Transverse colon (tissue), 4 donors: ENCODE measurements at regions of chrX and their contacts with region 1.

Region 1: GRCh38 chrX:27838176-27838575 is 30.4 kb downstream of the MAGEB10 start:
- DNase-seq: no peak
- H3K4me3 ChIP-seq: no peak overlapping the region
- H3K27ac ChIP-seq: no peak overlapping the region
- H3K4me1 ChIP-seq: no peaks in the 10 kb centered on the region
- H3K27me3 ChIP-seq: no peaks in the 10 kb centered on the region
- CTCF ChIP-seq: no peak
- EP300 ChIP-seq: no peak
- POLR2A ChIP-seq: no peak

Region 2: GRCh38 chrX:27878862-27879261 is 40.7 kb after region 1 on chrX:
- in situ Hi-C with region 1: no loop called
- intact Hi-C with region 1: no loop called
- DNase-seq: no peak
- H3K4me3 ChIP-seq: no peak overlapping the region
- H3K27ac ChIP-seq: no peak overlapping the region
- H3K4me1 ChIP-seq: no peaks in the 10 kb centered on the region
- H3K27me3 ChIP-seq: no peaks in the 10 kb centered on the region
- CTCF ChIP-seq: no peak
- EP300 ChIP-seq: no peak
- POLR2A ChIP-seq: no peak

Region 3: DNA sequence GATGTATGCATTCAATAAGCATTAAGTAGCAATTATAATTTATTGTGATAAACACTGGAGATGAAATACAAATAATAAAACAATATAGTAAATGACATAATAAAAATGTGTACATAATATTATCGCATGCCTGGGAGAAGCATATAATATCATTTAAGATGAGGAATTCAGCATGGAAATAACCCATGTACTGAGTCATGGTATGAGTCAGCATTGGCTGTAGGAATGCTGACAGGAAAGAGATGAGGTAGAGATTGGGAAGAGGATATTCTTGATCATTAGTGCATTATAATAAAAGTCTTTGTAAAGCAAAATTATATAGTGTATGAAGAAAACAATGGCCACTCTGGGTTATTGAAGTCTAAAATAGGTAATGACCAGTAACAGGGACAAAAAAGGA is 52.4 kb after region 1 on chrX:
- in situ Hi-C with region 1: no loop called
- intact Hi-C with region 1: loop called (anchors 10 kb)
- DNase-seq: no peak
- H3K4me3 ChIP-seq: no peak overlapping the region
- H3K27ac ChIP-seq: no peak overlapping the region
- H3K4me1 ChIP-seq: no peaks in the 10 kb centered on the region
- H3K27me3 ChIP-seq: no peaks in the 10 kb centered on the region
- CTCF ChIP-seq: no peak
- EP300 ChIP-seq: no peak
- POLR2A ChIP-seq: no peak